Activated naive CD4-positive, alpha-beta T cell treated with anti-CD3 and anti-CD28 coated beads for 36 hours (primary cell): ENCODE measurements at regions of chr21 and their contacts with region 1.

Region 1: DNA sequence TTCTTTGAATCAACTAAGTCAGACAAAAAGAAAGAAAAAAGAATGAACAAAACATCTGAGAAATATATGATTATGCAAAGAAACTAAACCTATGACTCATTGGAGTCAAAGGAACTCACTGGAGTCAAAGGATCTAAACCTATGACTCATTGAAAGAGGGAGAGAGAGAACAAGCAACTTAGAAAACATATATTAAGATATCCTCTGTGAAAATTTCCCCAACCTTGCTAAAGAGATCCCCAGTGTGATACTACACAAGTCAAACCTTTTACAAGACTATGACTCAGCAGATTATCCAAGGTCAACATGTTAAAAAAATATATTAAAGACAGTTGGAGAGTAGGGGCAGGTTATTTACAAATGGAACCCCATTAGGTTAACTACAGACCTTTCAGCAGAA is 1538.3 kb downstream of the NCAM2 start:
- DNase-seq: no peak
- H3K4me3 Mint-ChIP-seq: no peak overlapping the region
- H3K27ac Mint-ChIP-seq: no peak overlapping the region
- H3K4me1 Mint-ChIP-seq: peaks cover 11% of the 10 kb centered on the region
- H3K27me3 Mint-ChIP-seq: no peaks in the 10 kb centered on the region

Region 2: DNA sequence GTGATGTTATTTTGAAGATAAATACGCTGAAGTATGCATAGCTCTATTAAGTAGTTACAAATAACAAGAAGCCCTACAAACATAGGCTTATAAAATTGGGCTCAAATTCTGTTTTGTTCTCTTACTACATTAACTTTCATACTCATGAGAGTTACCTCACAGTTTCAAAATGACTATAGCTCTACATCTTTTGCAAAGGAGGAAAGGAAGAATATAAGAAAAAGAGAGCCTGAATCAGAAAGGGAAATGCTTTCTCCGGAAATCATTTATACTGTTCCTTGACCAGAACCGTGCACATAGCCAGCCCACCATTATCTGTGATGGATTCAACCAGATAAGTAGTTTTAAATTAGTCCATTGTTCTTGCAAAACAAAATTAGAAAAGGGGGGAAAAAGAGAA is 286.2 kb before region 1 on chr21:
- CTCF ChIA-PET with region 1: no interaction called
- intact Hi-C with region 1: no loop called
- DNase-seq: no peak
- H3K4me3 Mint-ChIP-seq: no peak overlapping the region
- H3K27ac Mint-ChIP-seq: no peak overlapping the region
- H3K4me1 Mint-ChIP-seq: peaks cover 4% of the 10 kb centered on the region
- H3K27me3 Mint-ChIP-seq: no peaks in the 10 kb centered on the region

Region 3: DNA sequence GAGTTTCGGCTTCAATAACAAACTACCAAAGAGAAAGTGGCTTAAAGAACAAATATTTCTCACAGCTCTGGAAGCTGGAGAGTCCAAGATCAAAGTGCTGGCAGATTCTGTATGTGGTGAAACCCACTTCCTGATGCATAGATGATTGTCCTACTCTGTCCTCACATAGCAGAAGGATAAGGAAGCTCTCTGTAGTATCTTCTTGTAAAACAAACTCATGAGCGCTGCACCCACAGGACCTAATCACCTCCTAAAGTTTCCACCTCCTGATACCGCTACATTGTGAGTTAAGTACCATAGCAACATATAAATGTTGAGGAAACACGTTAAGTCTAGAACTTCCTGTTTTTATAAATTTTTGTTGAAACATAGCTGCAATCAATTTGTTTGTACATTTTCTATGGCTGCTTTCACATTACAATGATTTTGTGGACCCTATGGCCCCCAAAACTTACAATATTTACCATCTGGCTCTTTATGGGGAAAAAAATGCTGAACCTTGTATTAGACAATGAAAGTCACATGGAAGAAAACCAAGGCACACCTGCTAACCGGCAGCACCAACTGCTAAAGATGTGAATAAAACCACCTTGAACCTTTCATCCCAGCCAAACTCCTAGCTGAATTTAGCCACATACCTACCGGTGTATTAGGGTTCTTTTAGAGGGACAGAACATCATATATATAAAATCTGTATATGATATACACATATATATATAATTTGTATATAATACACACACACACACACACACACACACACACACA is 114.9 kb before region 1 on chr21:
- CTCF ChIA-PET with region 1: no interaction called
- intact Hi-C with region 1: loop called (anchors 2 kb)
- DNase-seq: peak; percentile 22
- H3K4me3 Mint-ChIP-seq: peak overlapping the region; percentile 26
- H3K27ac Mint-ChIP-seq: no peak overlapping the region
- H3K4me1 Mint-ChIP-seq: peaks cover 15% of the 10 kb centered on the region
- H3K27me3 Mint-ChIP-seq: no peaks in the 10 kb centered on the region

Region 4: GRCh38 chr21:22691658-22692057 is 155.2 kb after region 1 on chr21:
- CTCF ChIA-PET with region 1: no interaction called
- intact Hi-C with region 1: no loop called
- DNase-seq: no peak
- H3K4me3 Mint-ChIP-seq: no peak overlapping the region
- H3K27ac Mint-ChIP-seq: no peak overlapping the region
- H3K4me1 Mint-ChIP-seq: no peaks in the 10 kb centered on the region
- H3K27me3 Mint-ChIP-seq: no peaks in the 10 kb centered on the region